ENCODE measurements at regions of chr4 and their contacts with region 1.

Region 1: GRCh38 chr4:124262211-124263179 is 450.0 kb downstream of the ANKRD50 start:
- DNase-seq: peak in 4 of 5 donors; percentile 36 to 58 (median 51)
- ATAC-seq: peak in 3 of 4 donors; percentile 82 to 96 (median 87)
- H3K4me3 ChIP-seq: no peak overlapping the region
- H3K27ac ChIP-seq: peak overlapping the region in 1 of 12 donors; percentile 19
- H3K4me1 ChIP-seq: peaks cover 0 to 6% (median 0%) of the 10 kb centered on the region in 12 donors
- H3K27me3 ChIP-seq: no peaks in the 10 kb centered on the region
- CTCF ChIP-seq: peak; percentile 69 to 95 (median 84)
- POLR2A ChIP-seq: no peak

Region 2: GRCh38 chr4:122922877-122923511 is 1339.5 kb before region 1 on chr4:
- intact Hi-C with region 1: loop called in 1 of 10 experiments (anchors 10 kb)
- DNase-seq: peak; percentile 83 to 89 (median 87)
- ATAC-seq: peak; percentile 98 to 99 (median 99)
- H3K4me3 ChIP-seq: peak overlapping the region; percentile 68 to 95 (median 85)
- H3K27ac ChIP-seq: peak overlapping the region; percentile 62 to 86 (median 77)
- H3K4me1 ChIP-seq: peaks cover 0 to 21% (median 12%) of the 10 kb centered on the region in 12 donors
- H3K27me3 ChIP-seq: no peaks in the 10 kb centered on the region
- CTCF ChIP-seq: peak in 1 of 12 donors; percentile 5
- POLR2A ChIP-seq: no peak

Region 3: DNA sequence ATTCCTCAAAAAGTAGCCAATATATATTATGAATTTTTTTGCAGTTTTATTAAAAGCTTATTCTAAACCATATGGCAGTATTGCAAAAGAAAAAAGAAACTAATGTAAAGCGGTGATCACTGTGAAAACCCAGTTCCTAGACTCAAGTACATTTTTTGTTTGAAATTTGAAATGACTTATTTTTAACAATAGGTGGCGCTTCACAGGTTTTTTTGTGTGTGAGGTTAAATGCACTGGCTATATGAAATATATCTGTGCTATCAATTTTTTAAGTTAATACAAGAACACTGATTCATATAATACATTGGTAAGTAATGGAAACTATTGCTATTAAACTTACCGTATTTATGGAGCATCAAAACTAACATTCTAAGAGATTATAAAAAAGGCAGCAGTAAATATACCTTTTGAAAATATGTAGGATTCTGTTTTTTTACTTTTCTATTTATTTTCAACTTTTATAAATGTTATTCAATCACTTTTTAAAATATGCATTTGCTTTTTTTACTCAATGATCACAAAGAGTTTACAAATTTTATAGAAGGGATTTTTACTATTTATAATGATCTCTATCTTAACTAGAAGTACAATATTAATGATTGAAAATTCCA is 871.5 kb before region 1 on chr4:
- intact Hi-C with region 1: loop called in 3 of 10 experiments (anchors 5 to 10 kb)
- DNase-seq: no peak
- ATAC-seq: no peak
- H3K4me3 ChIP-seq: no peak overlapping the region
- H3K27ac ChIP-seq: no peak overlapping the region
- H3K4me1 ChIP-seq: peaks cover 0 to 21% (median 10%) of the 10 kb centered on the region in 12 donors
- H3K27me3 ChIP-seq: no peaks in the 10 kb centered on the region
- CTCF ChIP-seq: peak; percentile 22 to 70 (median 51)
- POLR2A ChIP-seq: no peak

Region 4: GRCh38 chr4:123661080-123661737 is 601.3 kb before region 1 on chr4:
- intact Hi-C with region 1: loop called in 1 of 10 experiments (anchors 10 kb)
- DNase-seq: no peak
- ATAC-seq: no peak
- H3K4me3 ChIP-seq: no peak overlapping the region
- H3K27ac ChIP-seq: no peak overlapping the region
- H3K4me1 ChIP-seq: peaks cover 0 to 5% (median 0%) of the 10 kb centered on the region in 12 donors
- H3K27me3 ChIP-seq: no peaks in the 10 kb centered on the region
- CTCF ChIP-seq: peak; percentile 32 to 68 (median 50)
- POLR2A ChIP-seq: no peak

Measured in heart left ventricle (tissue), 16 donors.